ENCODE measurements at regions of chr13 and their contacts with region 1.

Region 1: GRCh38 chr13:42946927-42947326 is 45.1 kb downstream of the EPSTI1 start:
- DNase-seq: no peak
- ATAC-seq: no peak
- H3K4me3 Mint-ChIP-seq: no peak overlapping the region
- H3K27ac Mint-ChIP-seq: no peak overlapping the region
- H3K4me1 Mint-ChIP-seq: no peaks in the 10 kb centered on the region
- H3K27me3 Mint-ChIP-seq: no peaks in the 10 kb centered on the region
- CTCF ChIP-seq: no peak

Region 2: GRCh38 chr13:42174344-42175162 is 772.4 kb before region 1 on chr13:
- CTCF ChIA-PET with region 1: no interaction called
- POLR2A ChIA-PET with region 1: no interaction called
- intact Hi-C with region 1: no loop called
- DNase-seq: no peak
- ATAC-seq: no peak
- H3K4me3 Mint-ChIP-seq: no peak overlapping the region
- H3K27ac Mint-ChIP-seq: no peak overlapping the region
- H3K4me1 Mint-ChIP-seq: no peaks in the 10 kb centered on the region
- H3K27me3 Mint-ChIP-seq: no peaks in the 10 kb centered on the region
- CTCF ChIP-seq: no peak

Region 3: GRCh38 chr13:42929886-42930535 is 16.9 kb before region 1 on chr13:
- CTCF ChIA-PET with region 1: no interaction called
- POLR2A ChIA-PET with region 1: interaction called, 13 read pairs
- intact Hi-C with region 1: no loop called
- DNase-seq: no peak
- ATAC-seq: no peak
- H3K4me3 Mint-ChIP-seq: no peak overlapping the region
- H3K27ac Mint-ChIP-seq: no peak overlapping the region
- H3K4me1 Mint-ChIP-seq: no peaks in the 10 kb centered on the region
- H3K27me3 Mint-ChIP-seq: no peaks in the 10 kb centered on the region
- CTCF ChIP-seq: no peak

Region 4: GRCh38 chr13:43044720-43045301 is 97.9 kb after region 1 on chr13:
- CTCF ChIA-PET with region 1: no interaction called
- POLR2A ChIA-PET with region 1: no interaction called
- intact Hi-C with region 1: no loop called
- DNase-seq: no peak
- ATAC-seq: peak; percentile 23
- H3K4me3 Mint-ChIP-seq: peak overlapping the region; percentile 76
- H3K27ac Mint-ChIP-seq: peak overlapping the region; percentile 99
- H3K4me1 Mint-ChIP-seq: peaks cover 96% of the 10 kb centered on the region
- H3K27me3 Mint-ChIP-seq: no peaks in the 10 kb centered on the region
- CTCF ChIP-seq: no peak

Measured in activated B cell treated with CpG ODN at 0.5 μM for 24 hours (primary cell).